IMR-90 (cell line): ENCODE measurements at regions of chr3 and their contacts with region 1.

Region 1: GRCh38 chr3:40191850-40192448 is 117.6 kb upstream of the EIF1B start:
- DNase-seq: peak; percentile 51
- ATAC-seq: peak; percentile 99
- H3K4me3 ChIP-seq: no peak overlapping the region
- H3K27ac ChIP-seq: no peak overlapping the region
- H3K4me1 ChIP-seq: no peaks in the 10 kb centered on the region
- H3K27me3 ChIP-seq: no peaks in the 10 kb centered on the region; the same call in 1 of the 2 replicates
- CTCF ChIP-seq: peak; percentile 89
- POLR2A ChIP-seq: no peak
- RAD21 ChIP-seq: peak; percentile 85

Region 2: GRCh38 chr3:40445062-40445461 is 253.1 kb after region 1 on chr3:
- CTCF ChIA-PET with region 1: no interaction called
- POLR2A ChIA-PET with region 1: no interaction called
- dilution Hi-C with region 1: no loop called
- in situ Hi-C with region 1: no loop called
- intact Hi-C with region 1: loop called (anchors 10 kb)
- DNase-seq: no peak
- ATAC-seq: no peak
- H3K4me3 ChIP-seq: no peak overlapping the region
- H3K27ac ChIP-seq: no peak overlapping the region
- H3K4me1 ChIP-seq: no peaks in the 10 kb centered on the region
- H3K27me3 ChIP-seq: no peaks in the 10 kb centered on the region
- CTCF ChIP-seq: no peak
- POLR2A ChIP-seq: no peak
- RAD21 ChIP-seq: no peak